Posterior vena cava (tissue), 2 donors: ENCODE measurements at regions of chr1 and their contacts with region 1.

Region 1: GRCh38 chr1:245045087-245045881 is 109.5 kb upstream of the KIF26B start:
- DNase-seq: no peak

Region 2: GRCh38 chr1:244874974-244875579 is 170.2 kb before region 1 on chr1:
- intact Hi-C with region 1: loop called in 1 of 2 experiments (anchors 5 kb)
- DNase-seq: no peak

Region 3: DNA sequence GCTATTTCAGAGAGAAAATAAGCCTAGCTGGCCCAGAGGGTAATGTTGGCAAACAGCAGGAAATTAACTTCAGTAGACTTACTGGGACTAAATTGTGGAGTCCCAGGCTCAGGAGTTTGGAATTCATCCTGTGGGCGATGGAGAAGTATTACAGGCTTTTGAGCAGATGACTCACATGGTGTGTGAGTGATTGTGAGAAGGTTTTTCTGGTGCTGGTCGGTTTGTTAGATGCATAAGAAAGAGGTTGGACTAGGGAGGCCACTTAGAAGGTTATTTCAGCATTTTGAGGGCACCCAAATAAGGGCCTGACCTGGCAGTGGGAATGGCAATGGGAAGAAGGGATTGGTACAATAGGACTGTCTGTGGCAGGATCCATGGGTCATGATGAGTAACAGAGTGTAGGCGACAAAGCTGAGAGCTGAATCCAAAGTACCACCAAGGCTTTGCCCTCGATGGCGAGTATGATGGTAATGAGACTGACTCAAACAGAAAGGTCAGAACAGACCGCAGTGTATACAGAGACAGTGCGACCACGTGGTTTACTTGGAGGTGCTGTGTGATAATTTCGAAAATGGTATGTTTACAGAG is 40.3 kb after region 1 on chr1:
- intact Hi-C with region 1: no loop called
- DNase-seq: no peak